ENCODE measurements at regions of chr12 and their contacts with region 1.

Region 1: DNA sequence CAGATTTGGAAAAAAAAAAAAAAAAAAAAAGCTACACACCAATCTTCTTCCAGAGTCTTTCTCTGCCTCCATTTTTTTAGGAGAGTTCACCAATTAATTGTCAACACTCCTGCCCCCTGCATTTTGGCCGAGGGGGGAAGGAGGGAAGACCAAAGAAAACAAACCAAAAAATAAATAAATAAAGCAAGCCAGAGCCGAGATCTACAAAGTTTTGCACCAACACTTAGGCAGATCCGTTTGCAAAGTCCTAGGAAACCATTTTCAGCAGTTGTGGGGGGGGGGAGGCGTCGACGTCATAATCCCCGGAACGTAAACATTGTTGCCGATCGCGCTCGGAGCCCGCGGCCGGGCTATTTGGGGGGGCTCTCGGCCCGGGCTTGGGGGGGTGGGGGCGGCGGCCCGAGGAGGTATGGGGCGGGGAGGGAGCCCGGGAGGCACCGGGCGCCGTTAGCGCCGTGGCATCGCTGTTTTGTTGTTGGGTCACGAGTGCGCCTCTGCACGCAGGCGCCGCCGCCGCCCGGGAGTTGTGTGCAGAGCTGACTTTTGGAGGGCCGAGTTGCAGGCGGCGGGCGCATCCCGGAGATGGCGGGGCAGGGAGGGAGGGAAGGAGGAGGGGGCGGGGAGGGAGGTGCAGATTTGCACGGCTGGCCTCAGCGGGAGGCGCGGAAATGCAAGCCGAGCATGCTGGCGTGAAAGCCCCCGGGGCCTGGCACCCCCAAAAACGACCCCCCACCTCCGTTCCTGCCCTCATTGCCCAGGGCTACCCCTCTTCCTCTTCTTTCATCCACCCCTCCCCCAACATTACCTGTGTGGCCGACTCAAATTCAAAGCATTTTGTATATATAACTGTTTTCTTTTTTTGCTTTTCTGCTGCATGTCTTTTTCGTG is 598 bp downstream of the KDM2B start:
- DNase-seq: peak in 1 of 3 donors; percentile 56
- H3K4me3 ChIP-seq: peak overlapping the region; percentile 68 to 89 (median 69)
- H3K4me3 Mint-ChIP-seq: peak overlapping the region; percentile 93 to 98
- H3K27ac ChIP-seq: peak overlapping the region; percentile 46 to 90
- H3K27ac Mint-ChIP-seq: peak overlapping the region; percentile 90 to 98 (median 96)
- H3K4me1 ChIP-seq: peaks cover 51 to 59% of the 10 kb centered on the region in 2 donors
- H3K4me1 Mint-ChIP-seq: peaks cover 38% of the 10 kb centered on the region
- H3K27me3 ChIP-seq: no peaks in the 10 kb centered on the region
- H3K27me3 Mint-ChIP-seq: peaks cover 4 to 12% (median 8%) of the 10 kb centered on the region in 3 donors
- CTCF ChIP-seq: no peak

Region 2: DNA sequence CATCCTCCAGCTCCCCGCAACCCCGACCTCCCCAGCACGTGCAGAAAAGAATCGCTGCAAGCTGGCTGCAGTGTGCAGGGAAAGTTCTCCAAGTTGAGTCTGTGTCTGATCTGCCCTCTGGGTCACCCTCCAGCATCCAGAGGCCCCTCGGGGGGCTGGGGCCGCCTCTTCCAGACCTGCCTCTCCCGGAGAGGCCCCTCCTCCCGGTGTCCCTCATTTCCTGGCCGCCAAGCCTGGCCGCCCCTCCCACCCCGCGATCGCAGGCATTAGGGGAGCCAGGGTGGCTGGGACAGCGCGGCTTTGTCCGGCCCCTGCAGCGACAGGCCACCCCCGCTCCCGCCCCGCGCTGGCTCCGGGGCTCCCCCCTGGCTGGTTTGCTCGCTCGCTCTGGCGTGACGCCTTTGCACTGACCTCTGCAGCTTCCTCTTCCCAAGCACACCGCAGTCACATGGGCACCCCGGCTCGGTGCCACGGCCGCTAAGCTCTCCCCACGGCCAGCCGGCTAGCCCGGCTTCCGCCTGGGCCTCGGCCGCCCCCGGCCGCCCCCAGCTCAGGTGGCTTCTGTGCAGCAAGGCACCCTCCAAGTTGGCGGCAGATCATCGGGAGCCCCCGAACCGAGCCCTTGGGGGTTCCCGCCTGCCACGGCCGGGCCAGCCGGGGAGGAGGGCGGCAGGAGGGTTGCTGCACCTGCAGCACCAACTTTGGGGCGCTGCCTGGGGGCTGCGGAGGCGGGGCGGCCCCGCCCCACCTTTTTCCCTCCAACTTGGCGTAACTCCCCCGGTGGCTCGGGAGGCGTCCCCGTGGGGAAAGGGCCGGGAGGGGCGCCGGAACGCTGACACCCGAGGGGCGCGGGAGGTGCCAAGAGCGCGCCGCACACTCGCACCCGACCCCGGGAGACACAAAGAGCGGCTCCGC is 43.1 kb before region 1 on chr12:
- intact Hi-C with region 1: loop called in 1 of 2 experiments (anchors 5 kb)
- DNase-seq: peak; percentile 88 to 93 (median 89)
- H3K4me3 ChIP-seq: peak overlapping the region; percentile 51 to 78 (median 71)
- H3K4me3 Mint-ChIP-seq: peak overlapping the region; percentile 79 to 80
- H3K27ac ChIP-seq: peak overlapping the region; percentile 89 to 90
- H3K27ac Mint-ChIP-seq: peak overlapping the region; percentile 84 to 94 (median 91)
- H3K4me1 ChIP-seq: peaks cover 35 to 55% of the 10 kb centered on the region in 2 donors
- H3K4me1 Mint-ChIP-seq: peaks cover 50% of the 10 kb centered on the region
- H3K27me3 ChIP-seq: no peaks in the 10 kb centered on the region
- H3K27me3 Mint-ChIP-seq: peaks cover 0 to 3% (median 1%) of the 10 kb centered on the region in 3 donors
- CTCF ChIP-seq: no peak

Region 3: GRCh38 chr12:121610239-121611149 is 30.3 kb after region 1 on chr12:
- intact Hi-C with region 1: loop called in 1 of 2 experiments (anchors 5 kb)
- DNase-seq: no peak
- H3K4me3 ChIP-seq: no peak overlapping the region
- H3K4me3 Mint-ChIP-seq: no peak overlapping the region
- H3K27ac ChIP-seq: no peak overlapping the region
- H3K27ac Mint-ChIP-seq: peak overlapping the region in 1 of 7 donors; percentile 42
- H3K4me1 ChIP-seq: peaks cover 0 to 6% of the 10 kb centered on the region in 2 donors
- H3K4me1 Mint-ChIP-seq: peaks cover 9% of the 10 kb centered on the region
- H3K27me3 ChIP-seq: no peaks in the 10 kb centered on the region
- H3K27me3 Mint-ChIP-seq: peaks cover 0 to 5% (median 2%) of the 10 kb centered on the region in 3 donors
- CTCF ChIP-seq: no peak

Region 4: DNA sequence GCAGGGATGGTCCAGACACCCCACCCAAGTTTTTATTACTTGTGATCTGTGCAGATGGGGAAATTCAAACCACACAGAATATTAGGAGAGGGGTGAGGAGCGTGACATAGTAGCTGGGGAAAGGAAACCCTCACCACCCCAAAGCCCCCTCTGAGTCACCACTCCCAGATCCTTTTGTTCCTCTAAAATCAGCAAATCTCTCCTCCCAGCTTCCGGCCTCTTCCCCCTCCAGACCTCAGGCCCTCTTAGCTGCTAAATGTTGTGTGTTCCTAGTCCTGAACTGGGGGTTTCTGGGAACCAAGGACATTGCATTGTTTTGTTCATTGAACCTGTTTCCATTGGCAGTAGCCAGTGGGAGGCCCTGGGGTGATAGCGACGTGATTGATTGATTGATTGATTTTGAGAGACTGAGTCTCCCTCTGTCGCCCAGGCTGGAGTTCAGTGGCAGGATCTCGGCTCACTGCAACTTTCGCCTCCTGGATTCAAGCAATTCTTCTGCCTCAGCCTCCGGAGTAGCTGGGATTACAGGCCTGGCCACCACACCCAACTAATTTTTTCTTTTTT is 40.2 kb after region 1 on chr12:
- intact Hi-C with region 1: loop called (anchors 5 kb)
- DNase-seq: peak in 2 of 3 donors; percentile 66 to 84
- H3K4me3 ChIP-seq: no peak overlapping the region
- H3K4me3 Mint-ChIP-seq: peak overlapping the region in 1 of 2 donors; percentile 64
- H3K27ac ChIP-seq: no peak overlapping the region
- H3K27ac Mint-ChIP-seq: peak overlapping the region in 4 of 7 donors; percentile 32 to 66 (median 54)
- H3K4me1 ChIP-seq: peaks cover 23 to 33% of the 10 kb centered on the region in 2 donors
- H3K4me1 Mint-ChIP-seq: peaks cover 34% of the 10 kb centered on the region
- H3K27me3 ChIP-seq: no peaks in the 10 kb centered on the region
- H3K27me3 Mint-ChIP-seq: peaks cover 0 to 7% (median 3%) of the 10 kb centered on the region in 3 donors
- CTCF ChIP-seq: no peak

Region 5: GRCh38 chr12:121712461-121713256 is 132.4 kb after region 1 on chr12 and contains the start of gene TMEM120B:
- intact Hi-C with region 1: no loop called
- DNase-seq: peak; percentile 62 to 82 (median 72)
- H3K4me3 ChIP-seq: peak within 1 kb of the TSS; percentile 54 to 97 (median 94)
- H3K4me3 Mint-ChIP-seq: peak within 1 kb of the TSS; percentile 91 to 95
- H3K27ac ChIP-seq: peak within 1 kb of the TSS; percentile 61 to 86
- H3K27ac Mint-ChIP-seq: peak within 1 kb of the TSS; percentile 92 to 98 (median 95)
- H3K4me1 ChIP-seq: peaks cover 18 to 28% of the 10 kb centered on the region in 2 donors
- H3K4me1 Mint-ChIP-seq: peaks cover 32% of the 10 kb centered on the region
- H3K27me3 ChIP-seq: no peaks in the 10 kb centered on the region
- H3K27me3 Mint-ChIP-seq: peaks cover 2 to 10% (median 4%) of the 10 kb centered on the region in 3 donors
- CTCF ChIP-seq: no peak
- polyA plus RNA-seq, gene TMEM120B: 0.65 to 2.4 (median 1.1) TPM

Measured in CD14-positive monocyte (primary cell).